Activated CD4-positive, alpha-beta memory T cell treated with anti-CD3 and anti-CD28 coated beads for 36 hours (primary cell): ENCODE measurements at regions of chr5 and their contacts with region 1.

Region 1: DNA sequence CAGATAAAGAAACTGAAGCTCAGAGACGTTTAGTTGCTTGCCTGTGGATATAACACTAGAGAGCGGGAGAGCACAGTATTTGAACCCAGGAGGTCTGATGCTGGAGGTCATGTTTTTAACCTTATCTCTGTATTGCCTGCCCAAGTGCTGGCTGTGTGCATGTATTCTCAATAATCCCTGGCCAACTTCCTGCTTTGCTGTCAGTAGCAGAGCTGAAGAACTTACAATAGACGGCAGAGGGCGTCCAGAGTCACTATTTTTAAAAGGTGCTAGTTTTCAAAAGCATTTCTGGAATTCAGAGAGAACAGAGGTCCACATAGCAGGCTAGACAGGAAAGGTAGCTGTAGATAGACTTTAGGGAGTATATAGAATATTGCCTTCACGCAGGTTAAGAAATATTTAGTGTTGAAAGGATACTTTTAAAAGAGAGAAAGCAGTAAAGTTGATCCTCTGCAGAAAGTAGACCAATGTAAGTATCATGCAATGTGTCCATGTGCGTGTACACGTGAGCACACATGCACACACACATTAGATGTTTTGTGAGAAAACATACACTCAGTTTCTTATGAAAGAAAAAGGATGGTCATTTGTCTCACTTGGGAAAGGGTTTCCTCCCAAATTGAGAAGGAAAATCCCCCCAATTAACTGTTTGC is 46.3 kb downstream of the PTCD2 start:
- DNase-seq: peak; percentile 38
- H3K4me3 Mint-ChIP-seq: no peak overlapping the region
- H3K27ac Mint-ChIP-seq: no peak overlapping the region
- H3K4me1 Mint-ChIP-seq: no peaks in the 10 kb centered on the region
- H3K27me3 Mint-ChIP-seq: no peaks in the 10 kb centered on the region

Region 2: DNA sequence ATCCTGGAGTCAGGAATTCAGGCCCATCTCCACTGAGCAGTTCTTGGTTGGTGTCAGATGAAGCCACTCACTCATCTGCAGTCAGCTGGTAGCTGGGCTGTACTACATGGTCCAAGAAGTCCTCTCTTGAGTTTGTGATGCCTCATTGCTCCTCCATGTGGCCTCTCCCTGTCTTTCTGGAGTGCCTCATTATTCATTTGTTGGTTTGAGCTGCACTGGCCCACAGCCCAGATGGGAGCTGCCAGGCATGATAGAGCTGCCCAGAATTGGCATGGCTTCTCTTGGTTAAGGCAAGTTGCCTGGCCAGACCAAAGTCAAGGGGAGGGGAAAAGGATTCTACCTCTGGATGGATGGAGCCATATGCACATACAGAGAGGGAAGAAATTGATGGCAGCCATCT is 38.3 kb before region 1 on chr5:
- CTCF ChIA-PET with region 1: no interaction called
- POLR2A ChIA-PET with region 1: no interaction called
- intact Hi-C with region 1: no loop called
- DNase-seq: no peak
- H3K4me3 Mint-ChIP-seq: no peak overlapping the region
- H3K27ac Mint-ChIP-seq: no peak overlapping the region
- H3K4me1 Mint-ChIP-seq: peaks cover 11% of the 10 kb centered on the region
- H3K27me3 Mint-ChIP-seq: no peaks in the 10 kb centered on the region

Region 3: DNA sequence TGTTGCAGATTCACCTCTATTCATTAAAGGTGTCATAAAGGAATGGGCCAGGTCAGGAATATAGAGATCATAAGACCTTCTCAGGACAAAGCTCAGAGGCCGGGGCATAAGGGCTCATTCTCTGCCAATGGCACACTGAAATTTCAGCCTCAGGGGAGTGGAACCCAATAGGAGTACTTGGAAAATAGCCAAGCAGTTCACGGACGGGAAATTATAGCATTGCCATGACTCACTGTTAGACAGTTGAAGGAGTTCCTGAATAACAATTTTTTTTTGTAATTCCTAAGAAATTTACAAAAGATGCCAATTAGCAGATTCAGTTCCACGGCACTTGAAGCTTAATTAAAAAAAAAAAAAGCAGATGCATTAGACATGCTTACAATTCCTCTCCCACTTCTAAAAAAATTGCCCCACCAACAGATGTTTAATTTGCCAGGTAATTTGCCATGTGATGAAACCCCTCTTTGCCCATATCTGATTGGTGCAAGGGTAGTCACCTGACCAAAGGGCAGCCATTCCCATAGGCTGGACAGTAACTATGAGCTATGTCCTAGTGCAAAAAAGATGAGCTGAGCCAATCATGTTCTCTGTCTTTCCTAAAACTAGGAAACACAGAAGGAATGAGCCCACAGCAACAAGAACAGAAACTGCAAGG is 12.3 kb after region 1 on chr5:
- CTCF ChIA-PET with region 1: interaction called, 11 read pairs
- POLR2A ChIA-PET with region 1: no interaction called
- intact Hi-C with region 1: no loop called
- DNase-seq: no peak
- H3K4me3 Mint-ChIP-seq: no peak overlapping the region
- H3K27ac Mint-ChIP-seq: no peak overlapping the region
- H3K4me1 Mint-ChIP-seq: no peaks in the 10 kb centered on the region
- H3K27me3 Mint-ChIP-seq: peaks cover 4% of the 10 kb centered on the region

Region 4: DNA sequence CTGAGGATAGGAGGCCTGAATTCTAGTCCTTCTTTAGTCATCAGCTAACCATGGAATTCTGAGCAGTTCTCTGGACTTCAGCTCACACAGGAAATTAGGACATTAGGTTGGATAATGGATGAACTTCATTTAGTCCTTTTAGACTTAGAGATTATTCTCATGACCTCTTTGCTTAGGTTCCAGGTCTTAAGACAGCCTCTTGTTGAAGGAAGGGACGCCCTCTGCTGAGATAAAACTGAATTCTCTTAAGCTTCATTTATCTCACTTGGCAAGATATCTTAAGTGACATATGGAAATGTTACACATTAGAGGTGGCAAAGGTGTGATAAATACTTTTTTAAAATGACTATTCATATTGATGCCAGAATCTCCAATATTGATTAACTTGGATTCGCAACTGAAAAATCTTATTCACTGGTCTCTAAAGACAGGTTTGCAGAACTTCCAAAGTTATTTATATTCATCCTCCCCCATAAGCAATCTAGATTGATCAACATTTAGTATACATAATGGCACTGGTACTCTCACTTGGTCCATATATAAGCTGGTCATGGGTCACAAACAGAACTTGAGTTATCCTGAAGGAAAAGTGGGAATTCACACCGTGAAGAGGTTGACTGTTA is 157.6 kb after region 1 on chr5:
- CTCF ChIA-PET with region 1: interaction called, 20 read pairs
- POLR2A ChIA-PET with region 1: no interaction called
- intact Hi-C with region 1: loop called (anchors 1 kb)
- DNase-seq: no peak
- H3K4me3 Mint-ChIP-seq: no peak overlapping the region
- H3K27ac Mint-ChIP-seq: no peak overlapping the region
- H3K4me1 Mint-ChIP-seq: no peaks in the 10 kb centered on the region
- H3K27me3 Mint-ChIP-seq: no peaks in the 10 kb centered on the region

Region 5: GRCh38 chr5:72556351-72557166 is 190.1 kb after region 1 on chr5:
- CTCF ChIA-PET with region 1: interaction called, 3 read pairs
- POLR2A ChIA-PET with region 1: no interaction called
- intact Hi-C with region 1: loop called (anchors 1 kb)
- DNase-seq: peak; percentile 41
- H3K4me3 Mint-ChIP-seq: peak overlapping the region; percentile 63
- H3K27ac Mint-ChIP-seq: no peak overlapping the region
- H3K4me1 Mint-ChIP-seq: peaks cover 13% of the 10 kb centered on the region
- H3K27me3 Mint-ChIP-seq: peaks cover 46% of the 10 kb centered on the region